ENCODE measurements at regions of chr6 and their contacts with region 1.

Region 1: DNA sequence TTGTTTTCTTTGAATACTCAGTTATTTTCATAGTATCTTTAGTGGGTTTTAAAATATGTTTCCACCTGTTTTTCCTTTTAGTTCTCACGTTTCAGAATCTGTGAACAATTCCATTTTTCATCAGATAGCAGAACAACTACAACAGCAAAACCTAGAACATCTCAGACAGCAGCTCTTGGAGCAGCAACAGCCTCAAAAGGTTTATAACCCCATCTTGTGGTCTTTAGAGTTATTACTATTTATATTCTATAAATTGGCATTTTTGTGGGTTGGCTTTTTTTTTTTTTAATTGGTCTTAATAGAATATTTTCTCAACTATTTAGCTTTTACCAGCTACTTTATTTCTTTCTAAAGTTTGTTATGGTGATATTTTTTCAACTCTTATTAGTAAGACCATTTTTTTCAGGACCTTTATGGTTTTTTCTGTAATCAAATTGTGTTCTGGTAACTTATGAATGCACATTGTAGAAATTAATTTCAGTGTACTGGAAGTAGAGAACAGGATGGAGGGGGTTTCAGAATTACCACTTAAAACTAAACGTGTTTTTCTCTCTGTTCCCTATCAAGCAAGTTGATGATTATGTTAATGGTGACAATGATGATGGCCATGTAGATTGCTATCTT is 72.2 kb downstream of the SCAF8 start:
- DNase-seq: peak; percentile 45
- H3K27ac ChIP-seq: no peak overlapping the region
- CTCF ChIP-seq: no peak; the same call in 1 of the 2 replicates

Region 2: GRCh38 chr6:154675602-154676088 is 129.8 kb before region 1 on chr6:
- CTCF ChIA-PET with region 1: interaction called, 12 read pairs
- POLR2A ChIA-PET with region 1: no interaction called
- DNase-seq: peak; percentile 94
- H3K27ac ChIP-seq: no peak overlapping the region
- CTCF ChIP-seq: peak; percentile 98

Region 3: DNA sequence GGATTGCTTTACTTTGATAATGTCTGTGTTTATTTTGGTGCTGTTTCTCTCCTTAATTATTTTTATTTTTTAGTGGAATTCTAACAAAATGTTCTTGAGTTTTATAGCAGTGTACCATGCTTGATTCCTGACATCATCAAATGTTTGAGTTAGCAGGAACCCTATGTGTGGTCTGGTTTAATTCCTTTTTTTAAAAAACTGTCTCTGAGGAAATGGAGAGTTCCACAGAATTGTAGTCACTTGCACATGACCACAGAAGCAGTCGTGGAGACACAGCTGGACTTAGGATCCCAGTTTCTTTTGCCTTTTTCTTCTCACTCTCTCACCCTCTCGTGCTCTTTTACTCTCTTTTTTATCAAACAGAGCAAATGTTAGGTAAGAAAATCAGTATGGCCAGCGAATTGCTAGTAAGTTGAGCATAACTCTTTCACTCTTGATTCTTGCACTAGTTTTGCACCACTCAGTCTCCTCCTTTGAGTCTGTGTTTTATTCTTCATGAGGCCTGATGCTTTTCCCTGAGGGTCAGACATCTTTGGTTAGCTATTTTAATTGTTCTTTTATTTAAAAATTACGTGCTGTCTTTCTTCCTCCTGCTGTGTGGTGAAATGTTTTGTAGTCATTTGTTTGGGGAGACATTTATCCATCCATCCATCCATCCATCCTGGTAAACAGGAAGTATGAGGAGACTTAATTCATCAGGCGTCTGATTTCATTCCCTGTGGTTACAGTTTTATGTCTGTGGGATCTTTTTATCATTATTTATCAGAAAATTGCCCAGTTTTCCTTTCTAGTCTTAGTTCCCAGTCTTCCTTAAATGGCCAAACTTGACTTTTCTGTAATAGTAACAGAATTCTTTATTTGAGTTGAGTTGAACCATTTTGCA is 10.8 kb after region 1 on chr6:
- CTCF ChIA-PET with region 1: no interaction called
- POLR2A ChIA-PET with region 1: no interaction called
- DNase-seq: no peak
- H3K27ac ChIP-seq: no peak overlapping the region
- CTCF ChIP-seq: no peak

Region 4: GRCh38 chr6:154888426-154889295 is 83.3 kb after region 1 on chr6:
- CTCF ChIA-PET with region 1: no interaction called
- POLR2A ChIA-PET with region 1: no interaction called
- DNase-seq: no peak
- H3K27ac ChIP-seq: no peak overlapping the region
- CTCF ChIP-seq: no peak